OCI-LY7 (cell line): ENCODE measurements at regions of chr21 and their contacts with region 1.

Region 1: GRCh38 chr21:41460578-41461527 is 34.8 kb downstream of the MX1 start:
- DNase-seq: peak; percentile 67
- H3K4me3 ChIP-seq: no peak overlapping the region
- H3K27ac ChIP-seq: no peak overlapping the region
- H3K4me1 ChIP-seq: no peaks in the 10 kb centered on the region
- CTCF ChIP-seq: peak; percentile 82

Region 2: DNA sequence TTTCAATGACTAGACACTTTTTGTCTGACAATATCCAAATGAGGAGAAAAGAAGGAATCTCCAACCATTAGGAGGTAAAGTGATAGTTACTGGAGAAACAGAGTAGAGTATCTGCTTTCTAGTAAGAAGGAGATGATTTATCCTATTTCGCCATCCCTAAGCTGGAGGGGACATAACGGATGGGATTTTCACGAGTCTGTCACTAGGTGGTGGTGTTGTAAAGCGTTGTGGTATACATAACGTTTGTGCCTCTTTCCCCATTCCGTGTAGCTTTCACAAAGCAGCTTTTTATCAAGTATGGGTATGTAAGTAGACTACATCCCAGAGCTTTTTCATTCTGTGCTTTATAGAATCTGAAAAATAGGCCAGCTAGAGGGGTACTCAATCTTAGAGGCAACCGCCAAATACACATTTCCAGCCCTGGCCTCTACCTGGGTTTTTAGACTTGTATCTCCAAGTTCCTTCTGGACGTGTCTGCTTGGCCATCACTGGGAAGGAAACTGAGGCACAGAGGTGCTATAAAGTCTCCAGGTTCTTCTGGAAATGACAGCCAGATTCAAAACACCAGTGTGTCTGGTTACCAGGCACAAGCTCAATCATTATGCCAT is 177.5 kb before region 1 on chr21:
- CTCF ChIA-PET with region 1: interaction called, 5 read pairs
- POLR2A ChIA-PET with region 1: no interaction called
- intact Hi-C with region 1: loop called (anchors 1 kb)
- DNase-seq: peak; percentile 85
- H3K4me3 ChIP-seq: no peak overlapping the region
- H3K27ac ChIP-seq: no peak overlapping the region
- H3K4me1 ChIP-seq: peaks cover 8% of the 10 kb centered on the region
- CTCF ChIP-seq: peak; percentile 90